ENCODE measurements at regions of chr9 and their contacts with region 1.

Region 1: GRCh38 chr9:137534256-137535117 is 15.7 kb downstream of the PNPLA7 start:
- DNase-seq: no peak
- H3K4me3 ChIP-seq: no peak overlapping the region
- CTCF ChIP-seq: peak; percentile 62

Region 2: GRCh38 chr9:137286975-137287383 is 247.5 kb before region 1 on chr9:
- CTCF ChIA-PET with region 1: interaction called, 12 read pairs
- POLR2A ChIA-PET with region 1: no interaction called
- DNase-seq: no peak
- H3K4me3 ChIP-seq: no peak overlapping the region
- CTCF ChIP-seq: peak; percentile 70

Region 3: DNA sequence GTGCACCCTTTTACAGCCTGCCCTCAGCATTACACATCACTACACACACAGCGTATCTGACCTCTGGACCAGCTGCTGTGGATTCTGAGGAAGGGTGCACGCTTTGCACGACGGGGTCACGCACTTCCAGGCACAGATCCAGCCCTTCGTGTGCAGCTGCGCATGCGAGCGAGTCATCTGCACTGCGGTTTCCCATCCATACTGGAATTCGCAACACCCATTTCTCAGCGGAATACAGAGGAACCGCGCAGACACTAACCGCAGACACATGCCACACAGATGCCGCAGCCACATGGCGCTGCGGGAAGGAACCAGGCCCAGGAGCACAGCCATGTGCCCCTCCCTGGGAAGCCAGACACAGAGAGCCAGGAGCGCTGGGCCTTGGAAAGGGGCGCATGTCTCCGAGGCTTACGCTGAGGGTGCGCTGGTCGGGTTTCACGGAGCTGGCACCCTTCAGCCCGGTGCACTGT is 27.8 kb before region 1 on chr9:
- CTCF ChIA-PET with region 1: interaction called, 16 read pairs
- POLR2A ChIA-PET with region 1: no interaction called
- DNase-seq: peak; percentile 57
- H3K4me3 ChIP-seq: no peak overlapping the region; the same call in 1 of the 2 replicates
- CTCF ChIP-seq: no peak

Region 4: GRCh38 chr9:137524161-137524983 is 10.1 kb before region 1 on chr9:
- CTCF ChIA-PET with region 1: interaction called, 13 read pairs
- POLR2A ChIA-PET with region 1: no interaction called
- DNase-seq: no peak
- H3K4me3 ChIP-seq: no peak overlapping the region
- CTCF ChIP-seq: no peak

Region 5: DNA sequence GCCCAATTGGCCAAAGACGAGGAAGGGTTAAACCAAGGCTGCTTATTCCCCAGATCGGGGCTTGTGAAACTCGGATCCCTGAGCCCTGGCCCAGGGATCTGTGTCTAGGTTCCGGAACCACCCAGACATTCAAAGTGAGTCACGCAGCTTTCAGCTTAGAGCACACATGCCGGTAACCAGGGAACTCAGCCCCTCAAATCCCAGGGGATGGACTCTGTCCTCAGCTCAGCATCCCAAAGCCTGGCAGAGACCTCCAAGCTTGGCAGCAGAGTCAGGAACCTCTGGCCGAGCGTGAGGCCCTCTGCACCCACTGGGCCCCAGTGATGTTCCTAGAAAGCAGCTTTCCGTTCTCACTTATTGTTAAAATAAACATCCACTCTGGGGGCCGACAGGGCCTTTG is 10.6 kb after region 1 on chr9:
- CTCF ChIA-PET with region 1: interaction called, 17 read pairs
- POLR2A ChIA-PET with region 1: no interaction called
- DNase-seq: no peak
- H3K4me3 ChIP-seq: no peak overlapping the region
- CTCF ChIP-seq: no peak